ENCODE measurements at regions of chr15 and their contacts with region 1.

Region 1: DNA sequence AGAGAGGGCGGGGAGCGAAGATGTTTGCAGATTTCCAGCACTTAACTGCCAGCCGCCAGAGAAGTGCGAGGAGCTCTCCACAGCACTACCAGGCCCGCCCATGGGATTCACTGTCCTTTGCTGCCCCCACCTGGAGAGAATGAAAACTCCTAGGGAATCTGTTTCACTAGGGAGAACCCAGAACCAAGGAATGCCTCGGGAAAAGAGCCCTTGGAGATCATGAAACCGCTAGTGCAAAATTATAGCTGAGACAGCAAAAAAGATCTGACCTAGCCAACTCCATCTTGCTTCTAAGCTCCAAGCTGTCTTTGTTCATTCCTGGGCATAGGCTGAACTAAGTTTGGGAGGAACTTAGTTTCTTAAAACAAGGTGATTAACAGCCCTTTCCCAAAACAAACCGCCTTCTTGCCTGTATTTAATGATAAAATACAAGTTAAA is 82.6 kb upstream of the GCNT3 start:
- DNase-seq: peak; percentile 83
- H3K4me3 Mint-ChIP-seq: no peak overlapping the region
- H3K27ac Mint-ChIP-seq: no peak overlapping the region
- H3K4me1 Mint-ChIP-seq: peaks cover 22% of the 10 kb centered on the region
- H3K27me3 Mint-ChIP-seq: peaks cover 25% of the 10 kb centered on the region

Region 2: DNA sequence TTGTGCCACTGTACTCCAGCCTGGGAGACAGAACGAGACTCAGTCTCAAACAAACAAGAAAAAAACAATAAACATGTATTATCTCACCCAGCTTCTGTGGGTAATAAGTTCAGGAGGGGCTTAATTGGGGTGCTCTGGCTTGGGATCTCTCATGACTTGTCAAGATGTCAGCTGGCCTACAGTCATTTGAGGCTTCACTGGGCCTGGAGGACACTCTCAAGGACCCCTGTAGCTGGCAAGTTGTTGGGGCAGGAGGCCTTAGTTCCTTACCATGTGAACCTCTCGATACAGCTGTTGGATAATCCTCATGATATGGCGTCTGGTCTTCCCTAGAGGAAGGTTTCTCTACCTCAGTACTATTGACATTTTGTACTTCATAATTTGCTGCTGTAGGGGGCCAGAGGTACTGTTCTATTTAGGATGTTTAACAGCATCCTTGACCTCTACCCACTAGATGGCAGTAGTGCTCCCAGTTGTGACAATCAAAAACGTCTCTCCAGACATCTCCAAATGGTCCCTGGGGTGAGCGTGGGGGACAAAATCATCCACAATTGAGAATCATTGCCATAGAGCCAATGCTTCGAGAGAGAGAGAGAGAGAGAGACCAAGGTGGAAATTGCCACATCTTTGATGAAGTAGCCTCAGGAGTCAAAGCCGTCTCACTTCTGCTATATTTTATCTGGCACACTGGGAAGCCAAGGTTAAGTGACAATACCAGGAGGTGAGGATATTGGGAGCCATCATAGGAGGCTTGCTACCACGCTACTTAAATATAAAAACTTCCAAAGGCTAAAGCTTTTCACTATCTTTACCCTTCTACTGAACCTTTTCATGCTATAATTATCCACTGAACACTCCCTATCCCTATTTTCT is 571.6 kb before region 1 on chr15:
- CTCF ChIA-PET with region 1: interaction called, 11 read pairs
- DNase-seq: peak; percentile 76
- H3K4me3 Mint-ChIP-seq: no peak overlapping the region
- H3K27ac Mint-ChIP-seq: no peak overlapping the region
- H3K4me1 Mint-ChIP-seq: peaks cover 15% of the 10 kb centered on the region
- H3K27me3 Mint-ChIP-seq: peaks cover 4% of the 10 kb centered on the region

Region 3: DNA sequence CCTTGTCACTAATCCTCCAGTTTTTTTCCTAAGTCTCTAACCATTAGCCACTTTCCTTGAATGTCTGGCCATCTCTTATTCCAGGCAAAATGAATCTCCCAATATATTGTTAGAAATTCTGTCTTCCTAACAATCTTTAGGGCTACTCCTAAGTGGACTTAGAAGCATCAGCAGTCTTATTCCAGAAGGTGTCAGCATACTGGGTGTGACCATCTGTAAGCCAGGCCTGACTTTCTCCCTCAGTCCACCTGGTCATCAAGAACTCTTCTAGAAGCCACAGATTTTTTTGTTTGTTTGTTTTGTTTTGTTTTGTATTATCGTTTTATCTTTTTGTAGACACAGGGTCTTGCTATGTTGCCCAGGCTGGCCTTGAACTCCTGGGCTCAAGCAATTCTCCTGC is 23.1 kb before region 1 on chr15:
- CTCF ChIA-PET with region 1: interaction called, 13 read pairs
- DNase-seq: no peak
- H3K4me3 Mint-ChIP-seq: no peak overlapping the region
- H3K27ac Mint-ChIP-seq: no peak overlapping the region
- H3K4me1 Mint-ChIP-seq: no peaks in the 10 kb centered on the region
- H3K27me3 Mint-ChIP-seq: peaks cover 17% of the 10 kb centered on the region

Region 4: DNA sequence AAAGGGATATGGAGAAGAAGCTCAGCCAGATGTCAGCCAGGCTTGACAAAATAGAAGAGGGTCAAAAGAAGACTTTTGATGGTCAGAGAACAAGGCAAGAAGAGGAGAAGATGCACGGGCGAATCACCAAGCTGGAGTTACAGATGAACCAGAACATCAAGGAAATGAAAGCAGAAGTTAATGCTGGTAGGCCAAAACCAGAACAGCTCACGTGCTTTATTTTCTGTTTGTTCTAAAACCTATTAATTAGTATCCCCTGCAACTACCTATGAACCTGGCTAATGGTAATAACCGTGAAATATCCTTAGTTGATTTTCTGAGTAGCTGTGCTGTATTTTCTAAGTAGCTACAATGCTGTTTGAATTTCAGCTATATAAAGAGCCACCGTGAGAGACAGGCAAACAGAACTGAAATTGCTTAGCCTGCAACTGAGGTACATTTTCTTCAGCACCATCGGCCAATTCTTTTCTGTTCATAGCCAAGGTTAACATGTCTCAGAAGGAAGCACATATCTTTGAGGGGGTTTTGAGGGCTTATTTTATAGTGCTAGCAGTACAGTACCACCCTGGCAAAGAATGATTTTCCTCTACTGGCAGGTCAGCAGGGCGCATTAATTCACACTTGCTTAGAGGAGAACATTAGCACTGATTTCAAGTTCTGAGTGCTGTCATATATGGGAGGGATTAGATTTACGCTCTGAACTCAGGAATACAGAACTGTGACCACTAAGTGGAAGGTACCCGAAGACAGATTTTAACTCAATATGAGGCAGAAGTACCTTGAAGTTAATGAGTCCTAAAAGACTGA is 12.1 kb before region 1 on chr15:
- CTCF ChIA-PET with region 1: interaction called, 10 read pairs
- DNase-seq: no peak
- H3K4me3 Mint-ChIP-seq: no peak overlapping the region
- H3K27ac Mint-ChIP-seq: no peak overlapping the region
- H3K4me1 Mint-ChIP-seq: peaks cover 2% of the 10 kb centered on the region
- H3K27me3 Mint-ChIP-seq: peaks cover 16% of the 10 kb centered on the region

Region 5: GRCh38 chr15:59543721-59544547 is 14.9 kb after region 1 on chr15:
- CTCF ChIA-PET with region 1: interaction called, 13 read pairs
- DNase-seq: peak; percentile 38
- H3K4me3 Mint-ChIP-seq: no peak overlapping the region
- H3K27ac Mint-ChIP-seq: peak overlapping the region; percentile 38
- H3K4me1 Mint-ChIP-seq: peaks cover 18% of the 10 kb centered on the region
- H3K27me3 Mint-ChIP-seq: peaks cover 19% of the 10 kb centered on the region

Region 6: DNA sequence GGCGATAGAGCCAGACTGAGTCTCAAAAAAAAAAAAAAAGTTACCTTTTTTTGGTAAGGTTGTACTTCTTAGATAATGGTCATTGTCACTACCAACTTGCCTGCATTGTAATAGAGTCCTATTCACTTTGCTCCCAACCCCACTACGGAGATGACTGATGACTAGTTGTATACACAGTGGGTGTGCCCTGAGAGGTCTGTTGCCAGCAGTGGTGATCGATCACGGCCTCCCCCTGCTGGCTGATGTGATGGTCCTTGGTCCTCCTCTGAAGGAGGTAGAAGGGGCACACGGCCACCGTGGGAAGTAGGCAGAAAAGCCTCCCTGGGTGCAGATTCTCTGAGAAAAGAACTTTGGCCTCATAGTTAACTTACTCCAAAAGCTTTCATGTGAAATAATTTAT is 93.3 kb after region 1 on chr15:
- CTCF ChIA-PET with region 1: interaction called, 17 read pairs
- DNase-seq: peak; percentile 68
- H3K4me3 Mint-ChIP-seq: no peak overlapping the region
- H3K27ac Mint-ChIP-seq: no peak overlapping the region
- H3K4me1 Mint-ChIP-seq: no peaks in the 10 kb centered on the region
- H3K27me3 Mint-ChIP-seq: peaks cover 34% of the 10 kb centered on the region

Region 7: GRCh38 chr15:59636184-59636583 is 107.2 kb after region 1 on chr15:
- CTCF ChIA-PET with region 1: interaction called, 17 read pairs
- DNase-seq: no peak
- H3K4me3 Mint-ChIP-seq: no peak overlapping the region
- H3K27ac Mint-ChIP-seq: no peak overlapping the region
- H3K4me1 Mint-ChIP-seq: no peaks in the 10 kb centered on the region
- H3K27me3 Mint-ChIP-seq: peaks cover under 1% of the 10 kb centered on the region

Region 8: GRCh38 chr15:59797756-59798604 is 269.0 kb after region 1 on chr15:
- CTCF ChIA-PET with region 1: no interaction called
- DNase-seq: no peak
- H3K4me3 Mint-ChIP-seq: peak overlapping the region; percentile 43
- H3K27ac Mint-ChIP-seq: peak overlapping the region; percentile 72
- H3K4me1 Mint-ChIP-seq: peaks cover 76% of the 10 kb centered on the region
- H3K27me3 Mint-ChIP-seq: peaks cover 5% of the 10 kb centered on the region